Activated CD4-positive, alpha-beta T cell treated with anti-CD3 and anti-CD28 coated beads, Interleukin-2, amount 10 ng/mL, durations not matched to agents 7 days and 5 days (primary cell): ENCODE measurements at regions of chr6 and their contacts with region 1.

Region 1: GRCh38 chr6:292506-293192 is 362 bp downstream of the DUSP22 start:
- DNase-seq: peak; percentile 90
- H3K4me3 Mint-ChIP-seq: peak overlapping the region; percentile 87
- H3K27ac Mint-ChIP-seq: peak overlapping the region; percentile 97
- H3K4me1 Mint-ChIP-seq: peaks cover 57% of the 10 kb centered on the region
- H3K27me3 Mint-ChIP-seq: no peaks in the 10 kb centered on the region

Region 2: GRCh38 chr6:391559-392440 is 99.2 kb after region 1 on chr6 and contains the start of gene IRF4:
- CTCF ChIA-PET with region 1: no interaction called
- POLR2A ChIA-PET with region 1: interaction called, 11 read pairs
- DNase-seq: peak; percentile 70
- H3K4me3 Mint-ChIP-seq: peak within 1 kb of the TSS; percentile 91
- H3K27ac Mint-ChIP-seq: peak within 1 kb of the TSS; percentile 95
- H3K4me1 Mint-ChIP-seq: peaks cover 53% of the 10 kb centered on the region
- H3K27me3 Mint-ChIP-seq: no peaks in the 10 kb centered on the region
- total RNA-seq, gene IRF4: 111 to 126 TPM

Region 3: GRCh38 chr6:422433-423054 is 129.9 kb after region 1 on chr6:
- CTCF ChIA-PET with region 1: no interaction called
- POLR2A ChIA-PET with region 1: no interaction called
- DNase-seq: peak; percentile 58
- H3K4me3 Mint-ChIP-seq: no peak overlapping the region
- H3K27ac Mint-ChIP-seq: no peak overlapping the region
- H3K4me1 Mint-ChIP-seq: peaks cover 19% of the 10 kb centered on the region
- H3K27me3 Mint-ChIP-seq: no peaks in the 10 kb centered on the region